IMR-90 (cell line): ENCODE measurements at regions of chr2 and their contacts with region 1.

Region 1: DNA sequence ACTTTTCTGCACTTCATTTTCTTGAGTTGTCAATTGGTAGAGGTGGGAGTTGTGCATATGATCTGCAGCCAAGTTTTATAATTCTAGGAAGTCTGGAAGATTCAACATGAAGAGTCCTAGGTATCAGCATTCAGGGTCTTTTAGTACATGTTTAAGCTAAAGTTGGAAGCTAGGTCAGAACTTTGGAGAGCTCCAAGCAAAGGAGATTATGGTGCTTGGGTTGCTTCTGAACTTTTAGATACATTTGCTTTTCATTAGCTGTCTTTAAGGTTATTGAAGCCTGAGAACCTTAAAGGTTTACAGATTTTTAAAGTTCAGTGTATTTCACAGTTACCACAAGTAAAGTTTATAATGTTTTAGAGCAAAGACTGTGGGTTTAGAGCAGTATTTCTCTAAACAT is 85.5 kb downstream of the EPC2 start:
- DNase-seq: peak; percentile 8
- ATAC-seq: no peak
- H3K4me3 ChIP-seq: no peak overlapping the region
- H3K27ac ChIP-seq: no peak overlapping the region
- H3K4me1 ChIP-seq: no peaks in the 10 kb centered on the region
- H3K27me3 ChIP-seq: no peaks in the 10 kb centered on the region
- CTCF ChIP-seq: no peak
- POLR2A ChIP-seq: no peak
- RAD21 ChIP-seq: no peak

Region 2: DNA sequence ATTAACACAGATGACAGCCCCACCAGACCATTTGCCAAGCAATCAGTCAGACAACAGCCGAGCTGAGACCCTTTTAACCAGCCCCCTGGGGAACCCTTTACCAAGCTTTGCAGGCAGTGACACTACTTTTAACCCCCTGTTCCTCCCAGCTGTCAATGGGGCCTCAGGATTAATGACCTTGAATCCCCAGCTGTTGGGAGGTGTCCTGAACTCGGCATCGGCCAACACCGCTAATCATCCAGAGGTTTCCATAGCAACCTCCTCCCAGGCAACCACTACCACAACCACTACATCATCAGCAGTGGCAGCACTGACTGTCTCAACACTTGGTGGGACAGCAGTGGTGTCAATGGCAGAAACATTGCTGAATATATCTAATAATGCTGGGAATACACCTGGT is 246.4 kb before region 1 on chr2:
- CTCF ChIA-PET with region 1: no interaction called
- POLR2A ChIA-PET with region 1: no interaction called
- dilution Hi-C with region 1: no loop called
- in situ Hi-C with region 1: no loop called
- intact Hi-C with region 1: no loop called
- DNase-seq: peak; percentile 2
- ATAC-seq: no peak
- H3K4me3 ChIP-seq: no peak overlapping the region
- H3K27ac ChIP-seq: no peak overlapping the region
- H3K4me1 ChIP-seq: no peaks in the 10 kb centered on the region
- H3K27me3 ChIP-seq: no peaks in the 10 kb centered on the region
- CTCF ChIP-seq: no peak
- POLR2A ChIP-seq: no peak
- RAD21 ChIP-seq: no peak

Region 3: GRCh38 chr2:148658807-148659722 is 71.0 kb before region 1 on chr2:
- CTCF ChIA-PET with region 1: no interaction called
- POLR2A ChIA-PET with region 1: interaction called, 12 read pairs
- dilution Hi-C with region 1: no loop called
- in situ Hi-C with region 1: no loop called
- intact Hi-C with region 1: no loop called
- DNase-seq: peak; percentile 79
- ATAC-seq: peak; percentile 59
- H3K4me3 ChIP-seq: no peak overlapping the region
- H3K27ac ChIP-seq: no peak overlapping the region
- H3K4me1 ChIP-seq: peaks cover 8% of the 10 kb centered on the region
- H3K27me3 ChIP-seq: no peaks in the 10 kb centered on the region
- CTCF ChIP-seq: no peak
- POLR2A ChIP-seq: no peak
- RAD21 ChIP-seq: no peak

Region 4: DNA sequence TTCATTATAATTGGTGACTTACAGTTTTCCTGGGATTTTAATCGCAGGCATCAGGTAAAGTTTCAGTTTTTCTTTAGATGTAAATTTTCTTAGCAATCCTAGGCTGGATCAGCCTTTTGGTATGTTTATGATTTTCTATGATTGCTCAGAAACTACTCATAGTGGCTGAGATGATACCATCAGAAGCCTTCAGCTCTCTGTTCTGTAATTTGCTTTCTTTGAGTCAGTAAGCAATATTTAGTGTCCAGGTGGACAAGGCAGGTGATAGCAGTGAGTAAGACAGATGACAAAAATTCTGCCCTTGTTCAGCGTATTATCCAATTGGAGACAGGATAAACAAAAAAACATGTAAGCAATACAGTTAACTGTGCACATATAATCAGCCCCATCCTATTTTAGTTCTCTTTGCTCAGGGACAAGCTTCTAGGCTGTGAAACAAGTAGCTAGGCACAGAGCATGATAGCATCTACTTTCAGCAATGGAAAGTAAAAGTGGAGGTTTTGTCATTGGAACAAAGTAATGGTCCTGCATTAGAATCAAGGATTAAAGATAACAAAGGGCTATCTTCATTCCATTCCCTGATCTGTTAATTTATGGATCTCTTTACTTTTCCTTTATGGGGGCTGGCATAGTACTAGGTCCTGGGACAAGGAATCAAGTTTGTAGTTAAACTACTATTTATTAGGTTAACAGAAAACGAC is 15.2 kb after region 1 on chr2:
- CTCF ChIA-PET with region 1: interaction called, 3 read pairs
- POLR2A ChIA-PET with region 1: no interaction called
- dilution Hi-C with region 1: no loop called
- in situ Hi-C with region 1: no loop called
- intact Hi-C with region 1: loop called (anchors 1 kb)
- DNase-seq: peak; percentile 50
- ATAC-seq: no peak
- H3K4me3 ChIP-seq: no peak overlapping the region
- H3K27ac ChIP-seq: no peak overlapping the region
- H3K4me1 ChIP-seq: no peaks in the 10 kb centered on the region
- H3K27me3 ChIP-seq: no peaks in the 10 kb centered on the region
- CTCF ChIP-seq: no peak
- POLR2A ChIP-seq: no peak
- RAD21 ChIP-seq: no peak